HepG2 (cell line): ENCODE measurements at regions of chr19 and their contacts with region 1.

Region 1: DNA sequence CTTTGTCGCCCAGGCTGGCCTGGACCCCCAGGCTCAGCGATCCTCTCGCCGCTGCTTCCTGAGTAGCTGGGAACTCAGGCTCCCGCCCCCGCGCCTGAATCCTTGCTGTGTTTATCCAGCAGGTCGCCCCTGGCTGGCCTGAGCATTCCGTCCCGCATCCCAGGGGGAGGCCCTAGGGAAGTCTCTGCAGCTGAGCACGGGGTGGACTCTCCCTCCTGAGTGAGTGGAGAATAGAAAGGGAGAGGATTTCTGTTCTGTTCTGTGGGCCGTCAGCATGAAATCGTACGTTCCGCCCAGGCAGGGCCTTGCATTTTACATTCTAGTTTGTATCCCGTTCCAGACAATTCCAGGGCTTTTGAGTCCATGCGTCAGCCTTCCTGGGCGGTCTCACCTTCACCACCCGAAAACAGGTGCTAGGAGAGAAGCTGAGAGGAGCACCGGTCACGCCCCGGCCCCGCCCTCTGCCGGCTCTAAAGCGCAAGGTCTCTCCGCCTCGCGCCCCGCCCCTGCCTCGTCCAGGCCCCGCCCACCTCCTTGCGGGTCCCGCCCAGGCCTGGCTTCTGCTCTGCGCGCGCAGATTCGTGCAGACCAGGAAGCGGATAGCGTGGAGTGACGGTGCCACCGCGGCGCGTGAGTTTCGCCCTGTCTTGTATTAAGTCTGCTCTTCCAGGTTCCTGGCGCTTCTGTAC is at the start of gene ZNF761:
- DNase-seq: peak; percentile 91
- ATAC-seq: peak; percentile 96
- H3K4me3 ChIP-seq: peak within 1 kb of the TSS; percentile 91 to 96 (median 93)
- H3K27ac ChIP-seq: peak within 1 kb of the TSS; percentile 81
- H3K4me1 ChIP-seq: peaks cover 38% of the 10 kb centered on the region
- H3K27me3 ChIP-seq: no peaks in the 10 kb centered on the region; a peak in 1 of 5 replicates
- CTCF ChIP-seq: peak; percentile 39
- EP300 ChIP-seq: no peak
- POLR2A ChIP-seq: peak; percentile 74 to 91
- RAD21 ChIP-seq: no peak; the same call in 1 of the 2 replicates
- total RNA-seq, gene ZNF761: 16.2 and 20.8 TPM in 2 replicates

Region 2: GRCh38 chr19:53467485-53468262 is 36.1 kb after region 1 on chr19 and contains the start of gene ZNF813:
- CTCF ChIA-PET with region 1: no interaction called
- POLR2A ChIA-PET with region 1: interaction called, 3 read pairs
- in situ Hi-C with region 1: no loop called
- intact Hi-C with region 1: loop called (anchors 2 kb)
- DNase-seq: peak; percentile 82
- ATAC-seq: peak; percentile 92
- H3K4me3 ChIP-seq: peak within 1 kb of the TSS; percentile 72 to 89 (median 89)
- H3K27ac ChIP-seq: peak within 1 kb of the TSS; percentile 87
- H3K4me1 ChIP-seq: peaks cover 43% of the 10 kb centered on the region
- H3K27me3 ChIP-seq: no peaks in the 10 kb centered on the region; a peak in 1 of 5 replicates
- CTCF ChIP-seq: peak; percentile 8; the same call in 1 of the 2 replicates
- EP300 ChIP-seq: no peak
- POLR2A ChIP-seq: peak; percentile 61 to 88
- RAD21 ChIP-seq: no peak
- total RNA-seq, gene ZNF813: 8.9 and 14.9 TPM in 2 replicates

Region 3: DNA sequence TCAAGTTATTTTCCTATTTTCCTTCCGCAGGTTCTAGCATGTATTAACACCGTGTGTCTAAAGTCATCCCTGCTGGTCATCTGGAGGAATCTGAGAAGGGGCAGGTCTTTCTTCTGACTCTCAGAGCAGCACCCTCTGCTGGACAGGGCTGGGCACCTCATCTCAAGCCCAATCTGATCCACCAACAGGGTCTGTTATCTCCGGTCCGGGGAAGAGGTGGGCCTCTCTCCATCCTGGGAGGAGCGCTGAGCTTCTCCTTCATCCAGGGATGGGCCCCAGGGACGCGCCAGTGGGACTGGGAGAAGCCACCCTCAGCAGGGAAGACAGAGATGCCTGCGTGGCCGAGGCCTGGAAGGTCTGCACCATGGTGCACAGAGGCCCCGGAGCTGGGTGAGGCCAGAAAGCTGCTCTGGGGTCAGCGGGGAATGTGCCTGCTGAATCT is 80.4 kb after region 1 on chr19:
- CTCF ChIA-PET with region 1: no interaction called
- POLR2A ChIA-PET with region 1: interaction called, 6 read pairs
- in situ Hi-C with region 1: loop called (anchors 5 kb)
- intact Hi-C with region 1: loop called (anchors 2 kb)
- DNase-seq: peak; percentile 71
- ATAC-seq: peak; percentile 84
- H3K4me3 ChIP-seq: no peak overlapping the region
- H3K27ac ChIP-seq: no peak overlapping the region
- H3K4me1 ChIP-seq: peaks cover 44% of the 10 kb centered on the region
- H3K27me3 ChIP-seq: no peaks in the 10 kb centered on the region
- CTCF ChIP-seq: peak; percentile 80
- EP300 ChIP-seq: no peak
- POLR2A ChIP-seq: no peak
- RAD21 ChIP-seq: peak; percentile 65

Region 4: GRCh38 chr19:53537480-53538383 is 106.2 kb after region 1 on chr19 and contains the start of gene ZNF331:
- CTCF ChIA-PET with region 1: no interaction called
- POLR2A ChIA-PET with region 1: no interaction called
- in situ Hi-C with region 1: no loop called
- intact Hi-C with region 1: loop called (anchors 1 kb)
- DNase-seq: peak; percentile 39
- ATAC-seq: peak; percentile 84
- H3K4me3 ChIP-seq: peak within 1 kb of the TSS; percentile 44 to 74 (median 62); a peak in 5 of 6 replicates
- H3K27ac ChIP-seq: peak within 1 kb of the TSS; percentile 89
- H3K4me1 ChIP-seq: peaks cover 75% of the 10 kb centered on the region
- H3K27me3 ChIP-seq: no peaks in the 10 kb centered on the region
- CTCF ChIP-seq: peak; percentile 47; the same call in 1 of the 2 replicates
- EP300 ChIP-seq: no peak
- POLR2A ChIP-seq: peak; percentile 51 to 66; a peak in 2 of 4 replicates
- RAD21 ChIP-seq: no peak
- total RNA-seq, gene ZNF331: 13.3 and 15.2 TPM in 2 replicates

Region 5: GRCh38 chr19:53577968-53578367 is 146.4 kb after region 1 on chr19:
- CTCF ChIA-PET with region 1: no interaction called
- POLR2A ChIA-PET with region 1: no interaction called
- in situ Hi-C with region 1: no loop called
- intact Hi-C with region 1: no loop called
- DNase-seq: no peak
- ATAC-seq: no peak
- H3K4me3 ChIP-seq: no peak overlapping the region
- H3K27ac ChIP-seq: no peak overlapping the region
- H3K4me1 ChIP-seq: peaks cover 43% of the 10 kb centered on the region
- H3K27me3 ChIP-seq: no peaks in the 10 kb centered on the region
- CTCF ChIP-seq: no peak
- EP300 ChIP-seq: no peak
- POLR2A ChIP-seq: no peak
- RAD21 ChIP-seq: no peak